ENCODE measurements at regions of chrX and their contacts with region 1.

Region 1: GRCh38 chrX:24479924-24480323 is 14.8 kb downstream of the PDK3 start:
- DNase-seq: peak; percentile 56 to 88 (median 80)
- H3K4me3 ChIP-seq: peak overlapping the region; percentile 53
- H3K4me3 Mint-ChIP-seq: peak overlapping the region; percentile 49 to 89 (median 68)
- H3K27ac ChIP-seq: peak overlapping the region; percentile 83
- H3K27ac Mint-ChIP-seq: peak overlapping the region; percentile 76 to 99 (median 94)
- H3K4me1 ChIP-seq: peaks cover 74% of the 10 kb centered on the region
- H3K4me1 Mint-ChIP-seq: peaks cover 57 to 86% (median 81%) of the 10 kb centered on the region in 3 donors
- H3K27me3 ChIP-seq: no peaks in the 10 kb centered on the region
- H3K27me3 Mint-ChIP-seq: no peaks in the 10 kb centered on the region

Region 2: DNA sequence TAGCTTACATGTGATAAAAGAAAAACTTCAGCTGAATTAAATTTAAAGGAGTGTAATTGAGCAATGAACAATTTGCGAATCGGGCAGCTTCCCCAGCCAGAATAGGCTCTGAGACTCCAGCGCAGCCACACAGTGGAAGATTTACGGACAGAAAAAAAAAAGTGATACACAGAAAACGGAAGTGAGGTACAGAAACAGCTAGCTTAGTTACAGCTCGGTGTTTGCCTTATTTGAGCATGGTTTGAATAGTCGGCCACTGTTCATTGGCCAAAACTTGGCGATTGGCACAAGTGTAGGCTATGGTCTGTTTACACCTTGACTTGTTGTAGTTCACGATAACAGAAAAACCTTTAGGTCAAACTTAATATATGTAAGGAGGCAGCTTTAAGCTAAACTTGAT is 136.2 kb before region 1 on chrX:
- CTCF ChIA-PET with region 1: no interaction called
- POLR2A ChIA-PET with region 1: no interaction called
- DNase-seq: no peak
- H3K4me3 ChIP-seq: no peak overlapping the region
- H3K4me3 Mint-ChIP-seq: peak overlapping the region in 5 of 7 donors; percentile 16 to 68 (median 42)
- H3K27ac ChIP-seq: no peak overlapping the region
- H3K27ac Mint-ChIP-seq: peak overlapping the region in 1 of 8 donors; percentile 22
- H3K4me1 ChIP-seq: no peaks in the 10 kb centered on the region
- H3K4me1 Mint-ChIP-seq: peaks cover 0 to 9% (median 0%) of the 10 kb centered on the region in 3 donors
- H3K27me3 ChIP-seq: no peaks in the 10 kb centered on the region
- H3K27me3 Mint-ChIP-seq: peaks cover 0 to 4% of the 10 kb centered on the region in 2 donors

Region 3: GRCh38 chrX:24448762-24449250 is 31.1 kb before region 1 on chrX:
- CTCF ChIA-PET with region 1: no interaction called
- POLR2A ChIA-PET with region 1: no interaction called
- DNase-seq: no peak
- H3K4me3 ChIP-seq: no peak overlapping the region
- H3K4me3 Mint-ChIP-seq: no peak overlapping the region
- H3K27ac ChIP-seq: no peak overlapping the region
- H3K27ac Mint-ChIP-seq: no peak overlapping the region
- H3K4me1 ChIP-seq: no peaks in the 10 kb centered on the region
- H3K4me1 Mint-ChIP-seq: peaks cover 0 to 3% (median 0%) of the 10 kb centered on the region in 3 donors
- H3K27me3 ChIP-seq: no peaks in the 10 kb centered on the region
- H3K27me3 Mint-ChIP-seq: no peaks in the 10 kb centered on the region

Region 4: DNA sequence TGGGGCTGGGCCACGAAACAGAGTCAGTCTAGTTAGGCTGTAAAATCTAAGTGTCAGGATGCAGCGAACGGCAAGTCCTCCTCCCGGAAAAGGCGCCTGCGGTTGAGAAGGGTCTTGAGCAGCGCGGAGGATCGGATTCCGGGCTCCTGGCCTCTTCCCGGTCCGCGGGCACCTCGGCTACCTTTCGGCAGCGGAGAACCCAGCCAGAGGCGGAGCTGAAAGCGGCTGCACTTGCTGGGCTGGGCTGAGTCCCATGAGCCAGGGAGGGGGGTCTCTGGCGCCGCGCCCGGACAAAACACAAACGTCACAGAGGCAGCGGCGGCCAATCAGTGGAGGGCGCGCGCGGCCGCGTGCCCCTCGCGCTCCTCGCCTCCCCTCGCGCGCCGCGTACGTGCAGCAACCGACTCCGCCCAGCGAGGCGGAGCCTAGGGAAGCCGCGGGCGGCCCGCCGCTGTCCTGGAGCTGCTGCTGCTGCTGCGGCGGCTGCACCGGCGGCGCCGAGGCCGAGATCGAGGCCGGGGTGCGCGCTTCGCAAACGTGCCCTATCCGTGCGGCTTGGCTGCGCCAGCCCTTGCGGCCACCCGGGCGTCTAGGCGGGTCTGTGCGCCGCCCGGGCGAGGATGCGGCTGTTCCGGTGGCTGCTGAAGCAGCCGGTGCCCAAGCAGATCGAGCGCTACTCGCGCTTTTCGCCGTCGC is 14.9 kb before region 1 on chrX and contains the start of gene PDK3:
- CTCF ChIA-PET with region 1: interaction called, 22 read pairs
- POLR2A ChIA-PET with region 1: interaction called, 34 read pairs
- DNase-seq: peak; percentile 82 to 94 (median 90)
- H3K4me3 ChIP-seq: peak within 1 kb of the TSS; percentile 71
- H3K4me3 Mint-ChIP-seq: peak within 1 kb of the TSS; percentile 83 to 93 (median 87)
- H3K27ac ChIP-seq: peak within 1 kb of the TSS; percentile 79
- H3K27ac Mint-ChIP-seq: peak within 1 kb of the TSS; percentile 77 to 97 (median 95)
- H3K4me1 ChIP-seq: peaks cover 28% of the 10 kb centered on the region
- H3K4me1 Mint-ChIP-seq: peaks cover 38 to 43% (median 41%) of the 10 kb centered on the region in 3 donors
- H3K27me3 ChIP-seq: no peaks in the 10 kb centered on the region
- H3K27me3 Mint-ChIP-seq: peaks cover 0 to 2% of the 10 kb centered on the region in 2 donors
- total RNA-seq, gene PDK3: 26.0 to 26.4 TPM